ENCODE measurements at regions of chr1 and their contacts with region 1.

Region 1: GRCh38 chr1:160550572-160551034 is 27.5 kb upstream of the SLAMF6 start:
- DNase-seq: peak; percentile 67
- H3K4me3 ChIP-seq: no peak overlapping the region
- H3K27ac ChIP-seq: peak overlapping the region; percentile 86
- H3K4me1 ChIP-seq: peaks cover 74% of the 10 kb centered on the region
- CTCF ChIP-seq: peak; percentile 82

Region 2: DNA sequence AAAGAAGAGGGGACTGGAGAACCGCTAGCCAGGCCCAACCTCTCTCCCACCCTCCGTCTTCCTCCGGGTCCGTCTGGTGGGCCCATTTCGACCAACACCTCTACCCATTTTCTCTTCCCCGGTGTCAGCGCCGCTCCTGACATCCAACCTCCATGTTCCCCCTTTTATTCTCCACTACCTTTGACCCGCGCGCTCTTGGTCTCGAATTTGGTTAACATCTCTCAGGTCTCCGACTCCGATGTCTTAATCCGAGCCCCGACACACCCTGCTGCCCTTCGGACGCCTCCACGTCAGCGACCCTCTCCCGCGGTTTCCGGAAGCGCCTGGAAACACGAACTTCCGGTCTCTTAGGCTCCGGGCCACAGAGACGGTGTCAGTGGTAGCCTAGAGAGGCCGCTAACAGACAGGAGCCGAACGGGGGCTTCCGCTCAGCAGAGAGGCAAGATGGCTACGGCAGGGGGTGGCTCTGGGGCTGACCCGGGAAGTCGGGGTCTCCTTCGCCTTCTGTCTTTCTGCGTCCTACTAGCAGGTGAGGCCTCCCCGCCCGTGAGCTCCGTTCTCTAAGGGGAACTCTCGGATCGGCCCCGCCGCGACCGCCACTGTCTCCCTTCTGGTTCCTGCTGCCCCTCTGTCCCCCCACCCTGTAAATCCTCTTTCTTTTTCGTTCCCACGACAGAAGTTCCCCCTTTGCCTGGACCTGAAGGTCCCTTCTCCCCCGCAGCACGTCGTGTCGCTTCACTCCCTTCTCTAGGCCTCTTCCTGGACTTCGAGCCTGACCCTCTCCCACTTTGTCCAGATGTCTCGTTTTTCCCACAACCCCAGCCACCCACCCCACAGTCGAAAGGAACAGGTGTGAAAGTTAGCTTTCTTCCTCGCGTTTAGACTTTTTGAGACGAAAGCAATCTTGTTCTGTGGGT is 207.4 kb before region 1 on chr1 and contains the starts of genes COPA and NCSTN:
- CTCF ChIA-PET with region 1: no interaction called
- POLR2A ChIA-PET with region 1: no interaction called
- intact Hi-C with region 1: no loop called
- DNase-seq: peak; percentile 97
- H3K4me3 ChIP-seq: peak within 1 kb of the TSS; percentile 87
- H3K27ac ChIP-seq: peak within 1 kb of the TSS; percentile 60
- H3K4me1 ChIP-seq: peaks cover 44% of the 10 kb centered on the region
- CTCF ChIP-seq: no peak
- total RNA-seq, gene COPA: 74.2 and 93.0 TPM in 2 replicates
- total RNA-seq, gene NCSTN: 32.0 and 44.8 TPM in 2 replicates

Region 3: DNA sequence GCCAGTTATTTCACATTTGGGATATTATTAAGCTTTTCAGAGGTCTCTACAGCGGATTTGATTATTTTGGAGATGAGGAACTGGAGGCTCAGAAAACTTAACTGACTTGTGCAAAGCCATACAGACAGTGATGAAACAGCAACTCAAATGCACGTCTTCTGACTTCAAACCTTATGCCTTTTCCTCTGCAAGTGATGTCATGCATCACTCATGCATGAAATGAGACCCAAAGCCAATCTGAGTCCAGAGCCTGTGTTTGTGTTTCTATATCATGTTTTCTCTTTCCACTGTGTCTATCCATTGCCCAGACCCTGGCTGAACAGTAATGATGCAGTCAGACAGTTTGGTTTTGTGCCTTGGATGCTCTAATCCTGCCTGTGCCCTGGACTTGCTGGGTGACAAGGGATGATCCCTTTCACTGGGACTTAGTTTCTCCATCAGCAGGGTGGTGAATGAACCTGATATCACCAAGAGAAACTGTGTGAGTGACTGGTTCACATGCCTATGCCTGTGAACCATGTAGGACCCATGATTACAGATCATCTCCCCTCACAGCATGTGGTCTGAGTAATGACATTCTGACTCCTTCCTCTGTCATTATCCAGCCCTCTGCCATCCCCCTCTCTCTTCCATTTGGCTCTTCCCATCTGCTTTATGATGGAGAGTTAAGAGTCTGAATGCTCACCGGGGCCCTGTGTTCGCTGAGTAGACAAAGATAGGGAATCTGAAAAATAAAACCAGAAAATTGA is 60.9 kb before region 1 on chr1:
- CTCF ChIA-PET with region 1: interaction called, 3 read pairs
- POLR2A ChIA-PET with region 1: interaction called, 6 read pairs
- intact Hi-C with region 1: loop called (anchors 1 kb)
- DNase-seq: peak; percentile 52
- H3K4me3 ChIP-seq: peak overlapping the region; percentile 22
- H3K27ac ChIP-seq: peak overlapping the region; percentile 97
- H3K4me1 ChIP-seq: peaks cover 75% of the 10 kb centered on the region
- CTCF ChIP-seq: no peak

Region 4: DNA sequence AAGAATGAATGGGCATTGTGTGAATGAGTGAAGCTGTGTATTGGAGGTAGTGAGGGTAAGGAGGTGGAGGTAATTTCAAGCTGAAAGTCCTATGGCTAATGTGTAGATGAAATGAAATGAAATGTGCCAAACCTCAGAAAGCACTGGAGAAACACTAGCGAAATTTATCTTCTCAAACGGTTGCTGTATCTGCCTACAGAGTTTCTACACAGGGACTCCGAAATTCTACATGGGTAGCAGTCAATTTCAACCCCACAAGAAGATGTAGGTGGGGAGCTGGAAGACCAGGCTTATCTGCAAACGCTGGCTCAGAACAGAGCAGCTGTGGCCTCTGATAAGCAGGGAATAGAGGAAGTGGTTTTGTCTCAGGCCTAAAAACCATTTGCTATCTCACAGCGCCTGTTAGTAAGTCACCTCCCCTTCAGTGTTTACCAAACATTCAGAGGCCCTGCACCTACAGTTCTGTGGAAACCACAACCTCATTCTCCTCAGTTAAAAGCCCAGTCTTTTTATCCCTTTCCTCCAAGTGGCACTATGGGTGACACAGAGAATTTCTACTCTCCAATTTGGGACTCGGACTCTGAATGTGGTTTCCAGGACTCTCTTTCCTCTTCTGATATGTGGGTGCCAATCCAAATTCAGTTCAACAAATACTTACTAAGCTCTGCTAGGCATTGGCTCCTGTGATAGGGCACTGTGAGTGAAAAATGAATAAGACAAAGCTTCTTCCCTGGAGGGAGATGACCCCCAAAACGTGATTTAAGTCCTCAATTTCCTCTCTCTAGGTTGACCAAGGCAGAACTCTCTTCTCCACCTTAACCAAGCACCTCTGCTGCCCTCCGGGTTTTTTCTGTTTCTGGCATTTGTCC is 10.4 kb before region 1 on chr1:
- CTCF ChIA-PET with region 1: interaction called, 9 read pairs
- POLR2A ChIA-PET with region 1: interaction called, 13 read pairs
- intact Hi-C with region 1: no loop called
- DNase-seq: peak; percentile 85
- H3K4me3 ChIP-seq: peak overlapping the region; percentile 35
- H3K27ac ChIP-seq: peak overlapping the region; percentile 85
- H3K4me1 ChIP-seq: peaks cover 58% of the 10 kb centered on the region
- CTCF ChIP-seq: no peak

Region 5: GRCh38 chr1:160565564-160565963 is 15.0 kb after region 1 on chr1:
- CTCF ChIA-PET with region 1: no interaction called
- POLR2A ChIA-PET with region 1: interaction called, 24 read pairs
- intact Hi-C with region 1: no loop called
- DNase-seq: no peak
- H3K4me3 ChIP-seq: no peak overlapping the region
- H3K27ac ChIP-seq: peak overlapping the region; percentile 11
- H3K4me1 ChIP-seq: peaks cover 62% of the 10 kb centered on the region
- CTCF ChIP-seq: no peak

Region 6: DNA sequence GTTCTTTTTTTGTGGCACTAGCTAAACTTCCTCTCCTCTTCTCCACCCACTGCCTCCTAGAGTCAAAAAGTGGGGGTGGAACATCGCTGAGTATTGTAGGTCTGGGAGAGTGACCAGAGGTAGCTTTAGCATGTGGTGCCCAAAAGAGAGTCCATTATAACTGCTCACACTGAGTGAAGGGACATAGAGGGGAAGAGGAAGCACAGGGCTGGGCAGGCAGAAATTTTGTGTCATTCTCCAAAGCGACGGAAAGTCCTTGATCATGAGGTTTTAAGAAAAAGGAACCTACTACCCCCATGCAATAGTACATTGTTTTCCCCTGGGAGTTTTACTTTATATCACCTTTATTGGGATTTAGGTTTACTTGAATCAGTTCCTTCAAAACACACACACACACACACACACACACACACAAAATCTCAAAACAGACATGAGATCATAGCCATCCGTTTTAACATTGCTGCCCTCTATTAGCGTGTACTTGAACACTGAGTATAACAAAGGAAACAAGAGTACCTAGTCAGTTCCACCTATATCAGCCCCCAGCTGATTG is 24.6 kb after region 1 on chr1:
- CTCF ChIA-PET with region 1: interaction called, 6 read pairs
- POLR2A ChIA-PET with region 1: interaction called, 23 read pairs
- intact Hi-C with region 1: loop called (anchors 1 kb)
- DNase-seq: peak; percentile 31
- H3K4me3 ChIP-seq: peak overlapping the region; percentile 76
- H3K27ac ChIP-seq: peak overlapping the region; percentile 2
- H3K4me1 ChIP-seq: peaks cover 54% of the 10 kb centered on the region
- CTCF ChIP-seq: no peak

Region 7: GRCh38 chr1:160862203-160863060 is 311.8 kb after region 1 on chr1 and contains the start of gene CD244:
- CTCF ChIA-PET with region 1: no interaction called
- POLR2A ChIA-PET with region 1: no interaction called
- intact Hi-C with region 1: no loop called
- DNase-seq: no peak
- H3K4me3 ChIP-seq: no peak within 1 kb of the TSS
- H3K27ac ChIP-seq: no peak within 1 kb of the TSS
- H3K4me1 ChIP-seq: no peaks in the 10 kb centered on the region
- CTCF ChIP-seq: no peak
- total RNA-seq, gene CD244: not detected in 2 replicates